IMR-90 (cell line): ENCODE measurements at regions of chr18 and their contacts with region 1.

Region 1: GRCh38 chr18:3281456-3282400 is 19.8 kb downstream of the MYL12B start:
- DNase-seq: peak; percentile 86
- ATAC-seq: peak; percentile 79
- H3K4me3 ChIP-seq: no peak overlapping the region
- H3K27ac ChIP-seq: no peak overlapping the region
- H3K4me1 ChIP-seq: no peaks in the 10 kb centered on the region; the same call in 1 of the 2 replicates
- H3K27me3 ChIP-seq: no peaks in the 10 kb centered on the region
- CTCF ChIP-seq: peak; percentile 75
- POLR2A ChIP-seq: no peak
- RAD21 ChIP-seq: peak; percentile 89

Region 2: GRCh38 chr18:3593904-3594661 is 312.4 kb after region 1 on chr18:
- CTCF ChIA-PET with region 1: interaction called, 4 read pairs
- POLR2A ChIA-PET with region 1: no interaction called
- dilution Hi-C with region 1: no loop called
- in situ Hi-C with region 1: loop called (anchors 5 kb)
- intact Hi-C with region 1: loop called (anchors 1 kb)
- DNase-seq: peak; percentile 98
- ATAC-seq: peak; percentile 79
- H3K4me3 ChIP-seq: peak overlapping the region; percentile 57
- H3K27ac ChIP-seq: peak overlapping the region; percentile 96
- H3K4me1 ChIP-seq: peaks cover 29% of the 10 kb centered on the region
- H3K27me3 ChIP-seq: no peaks in the 10 kb centered on the region
- CTCF ChIP-seq: peak; percentile 83
- POLR2A ChIP-seq: peak; percentile 90
- RAD21 ChIP-seq: peak; percentile 65

Region 3: DNA sequence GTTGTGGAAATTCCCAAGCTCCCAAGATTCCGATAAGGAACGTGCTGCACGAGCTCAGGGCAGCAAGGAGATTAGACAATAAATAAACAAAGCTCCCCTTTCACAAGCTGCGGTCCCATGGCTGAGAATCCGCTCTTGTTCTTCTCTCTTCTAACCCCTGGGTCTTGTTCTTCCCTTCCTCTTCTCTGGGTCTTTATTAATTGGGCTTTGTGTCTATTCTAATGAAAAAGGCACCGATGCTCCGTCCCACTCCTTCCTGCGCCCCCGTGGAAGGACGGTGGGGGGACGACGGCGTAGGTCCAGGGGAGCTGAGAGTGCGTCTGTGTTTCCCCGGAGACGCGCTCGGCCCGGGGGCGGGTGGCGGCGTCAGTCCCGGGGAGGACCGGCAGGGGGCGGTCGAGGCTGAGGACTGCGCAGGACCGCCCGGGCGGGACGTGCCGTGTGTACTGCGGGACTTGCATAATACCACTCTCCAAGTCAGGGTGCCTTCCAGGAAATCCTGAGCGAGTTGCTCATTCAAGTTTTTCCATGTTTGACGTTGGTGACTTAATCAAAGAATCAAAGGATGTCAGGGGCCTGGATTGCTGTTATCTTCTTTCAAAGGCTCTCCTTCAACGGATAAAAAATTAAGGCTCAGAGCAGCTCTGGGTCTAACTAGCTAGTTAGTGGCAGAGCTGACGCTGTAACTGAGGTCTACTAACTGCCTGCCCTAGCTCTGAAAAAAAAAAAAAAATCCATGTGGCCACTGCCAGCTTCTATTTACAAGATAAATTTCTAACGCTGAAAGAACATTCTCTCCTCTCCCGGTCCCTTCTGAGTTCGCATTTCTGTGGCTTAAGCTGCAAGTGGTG is 489.6 kb after region 1 on chr18:
- CTCF ChIA-PET with region 1: interaction called, 4 read pairs
- POLR2A ChIA-PET with region 1: no interaction called
- dilution Hi-C with region 1: no loop called
- in situ Hi-C with region 1: no loop called
- intact Hi-C with region 1: loop called (anchors 2 kb)
- DNase-seq: peak; percentile 96
- ATAC-seq: peak; percentile 99
- H3K4me3 ChIP-seq: peak overlapping the region; percentile 60
- H3K27ac ChIP-seq: peak overlapping the region; percentile 91
- H3K4me1 ChIP-seq: peaks cover 5% of the 10 kb centered on the region
- H3K27me3 ChIP-seq: no peaks in the 10 kb centered on the region
- CTCF ChIP-seq: peak; percentile 97
- POLR2A ChIP-seq: peak; percentile 31; the same call in 1 of the 2 replicates
- RAD21 ChIP-seq: peak; percentile 92

Region 4: GRCh38 chr18:3983351-3983969 is 701.7 kb after region 1 on chr18:
- CTCF ChIA-PET with region 1: no interaction called
- POLR2A ChIA-PET with region 1: no interaction called
- dilution Hi-C with region 1: no loop called
- in situ Hi-C with region 1: loop called (anchors 10 kb)
- intact Hi-C with region 1: no loop called
- DNase-seq: peak; percentile 91
- ATAC-seq: peak; percentile 45
- H3K4me3 ChIP-seq: no peak overlapping the region
- H3K27ac ChIP-seq: no peak overlapping the region
- H3K4me1 ChIP-seq: peaks cover 13% of the 10 kb centered on the region
- H3K27me3 ChIP-seq: no peaks in the 10 kb centered on the region
- CTCF ChIP-seq: no peak
- POLR2A ChIP-seq: no peak
- RAD21 ChIP-seq: no peak

Region 5: GRCh38 chr18:4068552-4069158 is 786.9 kb after region 1 on chr18:
- CTCF ChIA-PET with region 1: no interaction called
- POLR2A ChIA-PET with region 1: no interaction called
- dilution Hi-C with region 1: no loop called
- in situ Hi-C with region 1: no loop called
- intact Hi-C with region 1: loop called (anchors 5 kb)
- DNase-seq: peak; percentile 56
- ATAC-seq: peak; percentile 91
- H3K4me3 ChIP-seq: no peak overlapping the region
- H3K27ac ChIP-seq: no peak overlapping the region
- H3K4me1 ChIP-seq: no peaks in the 10 kb centered on the region
- H3K27me3 ChIP-seq: no peaks in the 10 kb centered on the region
- CTCF ChIP-seq: peak; percentile 61
- POLR2A ChIP-seq: no peak
- RAD21 ChIP-seq: peak; percentile 55